Breast epithelium (tissue), 4 donors: ENCODE measurements at regions of chr14 and their contacts with region 1.

Region 1: DNA sequence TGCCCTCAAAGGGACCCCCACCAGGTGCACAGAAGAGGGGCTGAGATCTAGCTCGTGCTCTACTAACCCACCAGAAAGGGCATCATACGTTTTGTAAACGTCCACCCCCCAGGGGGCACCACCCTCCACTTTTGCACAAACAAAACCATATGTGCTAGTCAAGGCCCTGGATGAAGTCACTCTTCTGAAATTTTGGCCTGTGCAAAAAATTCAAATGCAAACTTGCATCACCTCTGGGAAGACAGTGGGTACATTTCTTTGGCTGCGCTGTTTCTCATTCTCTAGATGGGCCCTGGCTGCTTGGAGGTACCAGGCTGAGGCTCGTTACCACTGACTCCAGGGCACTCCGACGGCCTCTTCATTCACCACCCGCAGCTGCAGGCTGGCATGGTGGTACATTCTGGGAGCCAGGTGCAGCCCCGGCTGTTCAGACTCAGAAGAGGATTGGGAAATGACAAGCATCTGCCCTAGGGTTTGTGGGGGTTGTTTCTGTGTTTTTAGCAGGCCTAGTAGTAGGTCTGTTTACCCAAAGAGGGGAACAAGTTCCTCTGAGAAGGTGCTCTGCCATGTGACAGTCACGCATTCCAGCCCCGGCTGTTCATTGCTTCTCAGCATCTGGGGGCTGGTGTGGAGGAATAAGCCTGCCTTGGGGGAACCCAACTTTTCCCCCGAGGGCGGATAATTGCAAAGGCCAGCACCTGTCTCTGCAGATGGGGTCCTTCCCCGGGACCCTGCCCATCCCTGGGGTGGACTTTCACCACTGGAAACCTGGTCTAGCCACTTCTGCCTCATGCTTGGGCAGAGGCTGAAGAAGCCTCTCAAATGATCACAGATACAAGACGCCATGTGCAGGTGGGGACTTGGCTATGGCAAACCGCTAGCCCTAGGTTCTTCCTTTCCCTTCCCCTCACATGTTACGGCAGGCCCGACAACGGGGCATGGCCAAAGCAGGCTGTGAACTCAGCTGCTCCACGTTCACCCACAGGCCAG is 147.6 kb downstream of the DPF3 start:
- DNase-seq: no peak
- H3K4me3 ChIP-seq: no peak overlapping the region
- H3K27ac ChIP-seq: no peak overlapping the region
- H3K4me1 ChIP-seq: no peaks in the 10 kb centered on the region
- H3K27me3 ChIP-seq: no peaks in the 10 kb centered on the region
- CTCF ChIP-seq: no peak
- POLR2A ChIP-seq: no peak

Region 2: DNA sequence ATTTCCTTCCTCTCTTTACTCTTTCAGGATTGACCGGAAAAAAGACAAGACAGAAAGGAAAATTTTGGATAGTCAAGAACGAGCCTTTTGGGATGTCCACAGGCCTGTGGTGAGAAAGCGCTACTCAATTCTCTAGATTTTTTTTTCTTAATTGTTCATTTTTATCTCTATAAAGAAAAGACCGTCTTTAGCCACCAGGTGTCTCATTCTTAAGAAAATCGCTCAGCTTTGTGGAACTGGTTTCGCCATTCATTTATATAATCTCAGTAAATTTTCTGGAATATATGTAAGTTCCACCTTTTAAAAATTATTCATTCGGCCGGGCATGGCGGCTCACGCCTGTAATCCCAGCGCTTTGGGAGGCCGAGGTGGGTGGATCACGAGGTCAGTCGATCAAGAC is 273.4 kb before region 1 on chr14:
- intact Hi-C with region 1: no loop called
- DNase-seq: no peak
- H3K4me3 ChIP-seq: no peak overlapping the region
- H3K27ac ChIP-seq: no peak overlapping the region
- H3K4me1 ChIP-seq: peaks cover 0 to 4% of the 10 kb centered on the region in 2 donors
- H3K27me3 ChIP-seq: no peaks in the 10 kb centered on the region
- CTCF ChIP-seq: no peak
- POLR2A ChIP-seq: no peak

Region 3: GRCh38 chr14:72776701-72777261 is 30.5 kb after region 1 on chr14:
- intact Hi-C with region 1: loop called (anchors 2 kb)
- DNase-seq: no peak
- H3K4me3 ChIP-seq: no peak overlapping the region
- H3K27ac ChIP-seq: no peak overlapping the region
- H3K4me1 ChIP-seq: no peaks in the 10 kb centered on the region
- H3K27me3 ChIP-seq: no peaks in the 10 kb centered on the region
- CTCF ChIP-seq: no peak
- POLR2A ChIP-seq: no peak